OCI-LY7 (cell line): ENCODE measurements at regions of chr7 and their contacts with region 1.

Region 1: DNA sequence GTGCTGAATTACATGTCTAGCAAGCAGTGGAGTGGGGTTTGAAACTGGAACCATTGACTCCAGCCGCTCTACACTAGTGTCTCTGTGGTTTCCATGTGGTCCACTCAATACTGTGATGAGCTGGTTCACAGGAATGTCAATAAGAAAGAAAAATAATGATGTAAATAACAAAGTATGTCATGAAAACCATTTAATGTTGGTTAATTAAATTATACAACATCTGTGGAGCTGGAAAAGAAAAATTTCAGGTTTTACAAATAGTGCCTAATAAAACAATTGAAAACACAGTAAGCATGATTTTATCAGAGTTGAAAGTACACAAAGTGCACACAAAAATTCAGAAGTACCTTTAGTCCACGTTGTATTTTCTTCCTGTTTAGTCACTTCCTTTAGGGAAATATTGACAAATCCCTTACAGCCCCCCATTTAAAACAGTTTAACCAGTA is 28.7 kb upstream of the NAMPT start:
- DNase-seq: no peak
- H3K4me3 ChIP-seq: no peak overlapping the region
- H3K27ac ChIP-seq: no peak overlapping the region
- H3K4me1 ChIP-seq: no peaks in the 10 kb centered on the region
- CTCF ChIP-seq: no peak

Region 2: DNA sequence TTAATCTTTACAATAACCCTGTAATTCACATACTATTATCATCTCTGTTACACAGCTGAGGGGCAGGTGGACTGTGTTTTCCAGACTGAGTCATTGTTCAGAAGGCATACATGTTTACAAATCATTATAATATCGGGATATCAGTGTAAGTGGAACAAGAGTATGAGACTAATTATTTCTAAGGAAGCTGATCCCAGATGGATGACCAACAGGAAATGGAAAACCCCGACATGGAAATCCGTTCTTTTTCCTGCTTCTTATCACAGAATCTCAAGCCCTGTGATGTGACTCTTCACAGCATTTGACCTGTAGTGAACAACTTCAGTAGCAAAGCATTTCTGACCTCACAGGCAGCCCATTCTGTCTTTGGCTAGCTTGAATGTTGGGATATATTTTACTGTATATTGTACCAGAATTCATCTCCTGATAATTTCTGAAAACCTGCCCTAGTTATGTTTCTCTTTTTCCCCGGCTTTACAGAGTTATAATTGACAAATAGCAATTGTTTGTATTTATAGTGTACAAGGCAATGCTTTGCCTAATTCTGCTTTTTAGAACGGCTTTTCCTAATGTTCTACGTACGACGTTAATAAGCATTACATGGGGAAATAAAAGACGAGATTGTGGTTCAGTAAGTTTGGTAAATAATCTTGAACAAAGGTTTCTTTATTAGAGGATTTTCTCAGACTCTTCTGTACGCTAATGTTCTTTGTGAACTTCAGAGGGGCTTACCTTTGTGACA is 122.7 kb before region 1 on chr7:
- CTCF ChIA-PET with region 1: no interaction called
- POLR2A ChIA-PET with region 1: no interaction called
- intact Hi-C with region 1: no loop called
- DNase-seq: no peak
- H3K4me3 ChIP-seq: no peak overlapping the region
- H3K27ac ChIP-seq: no peak overlapping the region
- H3K4me1 ChIP-seq: no peaks in the 10 kb centered on the region
- CTCF ChIP-seq: no peak

Region 3: DNA sequence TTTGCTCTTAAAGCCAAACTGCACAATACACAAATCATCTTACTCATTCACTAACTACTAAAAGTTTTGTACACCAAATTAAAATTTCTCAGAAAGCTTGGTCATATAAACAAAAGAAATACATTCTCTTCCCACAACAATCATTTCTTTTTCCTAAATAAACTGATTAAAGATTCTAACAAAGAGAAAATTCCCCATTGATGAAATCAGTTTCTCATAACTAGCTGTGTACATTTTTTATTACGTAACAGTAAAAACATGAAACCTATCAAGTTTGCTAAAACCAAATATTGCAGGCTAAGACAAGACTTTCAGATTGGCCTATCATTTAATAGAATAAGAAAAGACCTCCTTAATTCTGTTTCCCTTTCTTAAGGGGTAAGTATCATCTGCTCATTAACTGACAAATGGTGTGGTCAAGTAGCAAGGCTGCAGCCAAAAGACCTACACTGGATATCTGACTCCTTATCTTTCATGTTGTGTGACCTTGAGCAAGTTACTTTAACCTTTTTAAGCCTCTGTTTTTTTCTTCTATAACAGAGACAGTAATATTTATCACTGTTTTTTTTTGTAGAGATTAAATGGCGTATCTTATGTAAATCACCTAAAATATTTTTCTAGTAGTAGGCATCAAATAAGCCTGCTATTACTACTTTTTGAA is 51.1 kb before region 1 on chr7:
- CTCF ChIA-PET with region 1: no interaction called
- POLR2A ChIA-PET with region 1: no interaction called
- intact Hi-C with region 1: loop called (anchors 2 kb)
- DNase-seq: no peak
- H3K4me3 ChIP-seq: no peak overlapping the region
- H3K27ac ChIP-seq: no peak overlapping the region
- H3K4me1 ChIP-seq: peaks cover 8% of the 10 kb centered on the region
- CTCF ChIP-seq: no peak